ENCODE measurements at regions of chr6 and their contacts with region 1.

Region 1: GRCh38 chr6:53484476-53485280 is 60.2 kb downstream of the GCLC start:
- DNase-seq: peak in 2 of 3 donors; percentile 48 to 50
- ATAC-seq: peak; percentile 84 to 86
- H3K4me3 ChIP-seq: no peak overlapping the region
- H3K27ac ChIP-seq: no peak overlapping the region
- H3K4me1 ChIP-seq: peaks cover 8% of the 10 kb centered on the region
- H3K27me3 ChIP-seq: no peaks in the 10 kb centered on the region

Region 2: GRCh38 chr6:53171605-53172446 is 312.9 kb before region 1 on chr6:
- intact Hi-C with region 1: loop called (anchors 2 to 5 kb)
- DNase-seq: peak; percentile 85 to 95 (median 95)
- ATAC-seq: peak; percentile 94
- H3K4me3 ChIP-seq: no peak overlapping the region
- H3K27ac ChIP-seq: no peak overlapping the region
- H3K4me1 ChIP-seq: no peaks in the 10 kb centered on the region
- H3K27me3 ChIP-seq: no peaks in the 10 kb centered on the region

Region 3: GRCh38 chr6:53294095-53294494 is 190.6 kb before region 1 on chr6:
- intact Hi-C with region 1: loop called in 1 of 4 experiments (anchors 10 kb)
- DNase-seq: no peak
- ATAC-seq: no peak
- H3K4me3 ChIP-seq: no peak overlapping the region
- H3K27ac ChIP-seq: no peak overlapping the region
- H3K4me1 ChIP-seq: peaks cover 6% of the 10 kb centered on the region
- H3K27me3 ChIP-seq: no peaks in the 10 kb centered on the region

Region 4: DNA sequence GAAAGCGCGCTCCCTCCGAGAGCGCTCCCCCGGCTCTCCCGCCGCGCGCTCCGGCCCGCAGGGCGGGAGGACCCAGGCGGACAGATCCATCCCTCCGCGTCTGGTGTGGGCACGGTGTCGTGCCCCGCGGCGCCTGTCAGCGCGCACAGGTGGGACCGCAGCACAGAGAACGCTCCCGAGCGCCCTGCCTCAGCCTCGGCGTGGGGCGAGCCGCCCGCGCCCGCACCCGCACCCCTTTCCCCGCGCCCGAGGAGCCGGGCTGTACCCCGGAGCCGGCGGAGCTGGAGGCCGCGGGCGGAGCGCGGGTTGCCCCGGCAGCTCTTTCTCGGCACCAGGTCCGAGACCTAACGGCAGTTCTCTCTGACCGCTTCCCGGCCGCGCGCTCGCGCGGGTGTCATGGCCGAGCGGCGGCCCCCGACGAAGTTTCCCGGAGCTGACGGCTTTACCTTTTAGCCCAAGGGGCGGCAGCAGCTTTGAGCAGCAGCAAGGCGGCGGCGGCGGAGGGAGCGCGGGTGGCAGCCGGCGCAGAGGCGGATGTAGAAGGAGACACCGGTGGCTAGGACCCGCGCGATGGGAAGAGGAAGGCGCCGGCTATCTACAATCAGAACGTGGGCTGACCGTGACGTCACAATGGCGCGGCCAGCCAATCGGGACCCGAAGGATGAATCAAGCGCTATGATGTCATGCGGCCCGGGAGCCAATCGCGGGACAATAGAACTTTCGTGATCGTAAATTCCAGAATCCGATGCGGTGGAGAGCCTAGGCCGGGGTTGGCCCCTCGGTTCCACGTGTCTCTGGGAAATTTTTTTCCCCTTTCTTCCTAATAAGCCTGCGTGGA is 136.1 kb before region 1 on chr6 and contains the start of gene ELOVL5:
- intact Hi-C with region 1: loop called in 1 of 4 experiments (anchors 5 kb)
- DNase-seq: peak; percentile 99 to 100 (median 100)
- ATAC-seq: peak; percentile 95 to 97
- H3K4me3 ChIP-seq: peak within 1 kb of the TSS; percentile 93
- H3K27ac ChIP-seq: peak within 1 kb of the TSS; percentile 98
- H3K4me1 ChIP-seq: no peaks in the 10 kb centered on the region
- H3K27me3 ChIP-seq: no peaks in the 10 kb centered on the region
- total RNA-seq, gene ELOVL5: 30.7 to 59.0 (median 38.7) TPM

Region 5: GRCh38 chr6:53410508-53411258 is 74.0 kb before region 1 on chr6:
- intact Hi-C with region 1: loop called in 2 of 4 experiments (anchors 10 kb)
- DNase-seq: peak; percentile 25 to 81 (median 69)
- ATAC-seq: peak; percentile 91 to 93
- H3K4me3 ChIP-seq: no peak overlapping the region
- H3K27ac ChIP-seq: no peak overlapping the region
- H3K4me1 ChIP-seq: no peaks in the 10 kb centered on the region
- H3K27me3 ChIP-seq: no peaks in the 10 kb centered on the region